Activated B cell treated with CpG ODN at 0.5 μM for 24 hours (primary cell): ENCODE measurements at regions of chr11 and their contacts with region 1.

Region 1: DNA sequence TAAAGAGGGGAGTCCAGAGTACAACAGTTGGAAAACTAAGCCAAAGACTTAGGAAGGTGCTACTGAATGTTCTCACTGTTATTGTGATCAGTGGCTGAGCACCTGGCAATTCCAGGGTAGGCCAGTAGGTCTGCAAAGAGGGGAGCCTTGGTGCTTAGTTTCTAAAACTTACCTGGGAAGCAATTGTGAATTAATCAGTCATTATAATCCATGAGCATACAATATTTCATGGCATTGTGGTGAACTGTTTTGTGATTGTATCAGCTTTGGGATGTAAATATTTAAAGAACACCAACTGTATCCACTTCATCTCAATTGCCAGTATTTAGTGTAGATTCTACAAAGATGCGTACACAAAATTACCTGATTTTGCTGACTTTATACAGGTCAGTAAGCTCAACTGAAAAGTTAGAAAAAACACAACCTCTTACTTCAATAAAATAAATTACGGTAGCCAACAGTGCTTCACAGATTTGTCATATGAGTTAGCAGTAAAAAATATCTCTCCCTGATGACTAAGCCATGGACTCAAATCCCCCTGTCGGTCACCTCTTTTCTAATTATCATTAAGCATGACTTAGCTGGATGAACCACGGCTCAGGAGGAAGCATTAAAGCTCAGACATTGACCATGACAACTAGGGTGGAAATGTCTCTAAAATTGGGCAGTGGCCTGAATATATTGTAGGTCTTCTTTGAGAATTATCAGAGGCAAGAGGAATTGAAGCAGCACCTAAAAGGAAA is 30.8 kb upstream of the SORL1 start:
- DNase-seq: no peak
- ATAC-seq: peak; percentile 24
- H3K4me3 Mint-ChIP-seq: no peak overlapping the region
- H3K27ac Mint-ChIP-seq: peak overlapping the region; percentile 73
- H3K4me1 Mint-ChIP-seq: peaks cover 80% of the 10 kb centered on the region
- H3K27me3 Mint-ChIP-seq: no peaks in the 10 kb centered on the region
- CTCF ChIP-seq: no peak

Region 2: GRCh38 chr11:121406291-121406690 is 15.0 kb before region 1 on chr11:
- CTCF ChIA-PET with region 1: no interaction called
- POLR2A ChIA-PET with region 1: interaction called, 6 read pairs
- intact Hi-C with region 1: loop called (anchors 2 kb)
- DNase-seq: no peak
- ATAC-seq: no peak
- H3K4me3 Mint-ChIP-seq: no peak overlapping the region
- H3K27ac Mint-ChIP-seq: no peak overlapping the region
- H3K4me1 Mint-ChIP-seq: peaks cover 25% of the 10 kb centered on the region
- H3K27me3 Mint-ChIP-seq: no peaks in the 10 kb centered on the region
- CTCF ChIP-seq: no peak

Region 3: DNA sequence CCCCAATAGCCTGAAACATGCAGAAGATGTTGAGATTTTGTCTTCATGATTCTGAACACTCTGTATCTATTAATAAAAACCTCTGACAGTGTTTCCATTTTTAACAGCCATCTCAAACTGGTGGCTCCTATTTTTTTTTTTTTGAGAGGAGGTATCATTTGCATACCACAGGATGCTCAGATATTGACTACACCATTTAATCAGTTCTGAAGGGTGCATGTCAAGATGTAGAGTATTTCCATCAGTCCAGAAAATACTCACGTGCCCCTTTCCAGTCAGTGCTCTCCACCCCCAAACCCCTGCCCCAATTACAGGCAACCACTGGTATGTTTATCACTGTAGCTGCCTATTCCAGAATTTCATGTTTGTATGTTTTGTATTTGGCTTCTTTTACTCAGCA is 116.7 kb after region 1 on chr11:
- CTCF ChIA-PET with region 1: no interaction called
- POLR2A ChIA-PET with region 1: no interaction called
- intact Hi-C with region 1: no loop called
- DNase-seq: no peak
- ATAC-seq: peak; percentile 49
- H3K4me3 Mint-ChIP-seq: no peak overlapping the region
- H3K27ac Mint-ChIP-seq: no peak overlapping the region
- H3K4me1 Mint-ChIP-seq: peaks cover 36% of the 10 kb centered on the region
- H3K27me3 Mint-ChIP-seq: no peaks in the 10 kb centered on the region
- CTCF ChIP-seq: no peak

Region 4: DNA sequence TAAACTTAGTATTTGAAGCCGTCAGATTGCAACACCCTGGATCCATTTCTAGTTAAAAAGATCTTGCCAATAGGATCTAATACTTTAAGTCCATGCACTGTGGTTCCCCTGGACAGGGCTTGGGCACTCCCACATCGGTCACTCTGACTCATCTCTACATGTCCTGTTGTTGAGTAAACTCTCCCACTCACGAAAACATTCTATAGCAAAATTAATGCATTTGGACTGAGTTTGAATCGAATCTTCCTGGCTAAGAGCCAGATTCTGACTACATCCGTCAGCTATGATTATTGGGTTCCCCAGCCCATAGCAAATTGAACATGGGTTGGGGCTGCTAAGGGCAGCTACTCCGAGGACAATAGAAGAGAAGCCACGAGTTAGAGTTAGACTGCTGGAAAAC is 213.6 kb after region 1 on chr11:
- CTCF ChIA-PET with region 1: no interaction called
- POLR2A ChIA-PET with region 1: no interaction called
- intact Hi-C with region 1: no loop called
- DNase-seq: no peak
- ATAC-seq: no peak
- H3K4me3 Mint-ChIP-seq: no peak overlapping the region
- H3K27ac Mint-ChIP-seq: no peak overlapping the region
- H3K4me1 Mint-ChIP-seq: no peaks in the 10 kb centered on the region
- H3K27me3 Mint-ChIP-seq: no peaks in the 10 kb centered on the region
- CTCF ChIP-seq: no peak